ENCODE measurements at regions of chr12 and their contacts with region 1.

Region 1: DNA sequence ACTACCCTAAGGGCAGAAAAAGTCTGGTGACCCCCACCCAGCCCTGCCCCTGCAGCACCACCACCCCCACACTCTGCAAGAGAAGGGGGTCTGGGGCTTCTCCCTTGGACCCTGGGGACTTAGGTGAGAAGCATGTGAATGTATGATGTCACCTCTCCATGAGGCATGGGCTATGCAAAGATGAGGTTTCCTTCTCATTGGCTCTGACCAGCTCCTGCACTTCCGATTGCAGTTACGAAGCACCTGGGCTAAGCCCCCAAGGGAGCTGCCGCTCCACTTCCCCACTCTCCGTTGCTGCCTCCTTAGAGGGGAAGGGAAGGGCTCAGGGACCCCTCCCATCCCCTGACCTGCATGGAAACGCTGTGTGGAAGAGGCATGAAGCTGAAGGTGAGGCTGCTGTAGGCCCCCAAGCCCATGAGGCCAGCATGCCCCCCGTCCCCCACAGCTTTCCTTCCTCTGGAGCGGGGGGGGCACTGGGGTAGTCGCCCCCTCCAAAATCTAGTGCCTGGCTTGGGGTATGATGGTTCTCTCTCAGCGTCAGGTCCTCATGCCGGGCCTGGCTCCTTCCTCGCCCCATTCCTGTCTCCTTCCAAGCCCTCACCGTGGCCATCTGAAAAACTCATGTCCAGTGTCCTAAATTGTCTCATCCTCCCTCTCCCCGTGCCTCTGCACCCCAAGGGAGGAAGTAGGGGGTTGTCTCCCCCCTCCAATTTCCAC is 5.5 kb upstream of the DDX23 start:
- DNase-seq: no peak
- ATAC-seq: peak in 1 of 4 donors; percentile 4
- H3K4me3 ChIP-seq: no peak overlapping the region
- H3K27ac ChIP-seq: no peak overlapping the region
- H3K4me1 ChIP-seq: peaks cover 0 to 3% (median 0%) of the 10 kb centered on the region in 4 donors
- H3K27me3 ChIP-seq: no peaks in the 10 kb centered on the region
- CTCF ChIP-seq: no peak
- POLR2A ChIP-seq: no peak

Region 2: DNA sequence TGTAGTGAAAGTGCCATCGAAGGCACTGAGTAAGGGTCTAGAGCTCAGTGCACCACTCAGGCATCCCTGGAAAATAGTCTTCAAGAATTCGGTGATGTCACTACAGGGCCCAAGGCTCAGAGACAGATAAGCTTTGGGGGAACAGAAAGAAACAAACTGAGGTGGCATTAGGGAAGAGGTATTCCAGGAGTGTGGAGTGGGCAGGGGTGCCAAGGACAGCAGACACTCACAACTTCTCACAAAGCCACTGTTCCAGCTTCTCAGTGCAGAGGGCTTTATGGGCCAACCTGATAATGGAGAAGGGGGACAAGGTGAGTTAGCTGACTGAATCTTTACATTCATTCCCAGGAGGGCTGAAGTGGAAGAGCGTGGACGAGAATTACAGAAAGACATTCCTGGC is 289.7 kb before region 1 on chr12:
- intact Hi-C with region 1: no loop called
- DNase-seq: no peak
- ATAC-seq: no peak
- H3K4me3 ChIP-seq: no peak overlapping the region
- H3K27ac ChIP-seq: no peak overlapping the region
- H3K4me1 ChIP-seq: no peaks in the 10 kb centered on the region
- H3K27me3 ChIP-seq: no peaks in the 10 kb centered on the region
- CTCF ChIP-seq: no peak
- POLR2A ChIP-seq: no peak

Region 3: DNA sequence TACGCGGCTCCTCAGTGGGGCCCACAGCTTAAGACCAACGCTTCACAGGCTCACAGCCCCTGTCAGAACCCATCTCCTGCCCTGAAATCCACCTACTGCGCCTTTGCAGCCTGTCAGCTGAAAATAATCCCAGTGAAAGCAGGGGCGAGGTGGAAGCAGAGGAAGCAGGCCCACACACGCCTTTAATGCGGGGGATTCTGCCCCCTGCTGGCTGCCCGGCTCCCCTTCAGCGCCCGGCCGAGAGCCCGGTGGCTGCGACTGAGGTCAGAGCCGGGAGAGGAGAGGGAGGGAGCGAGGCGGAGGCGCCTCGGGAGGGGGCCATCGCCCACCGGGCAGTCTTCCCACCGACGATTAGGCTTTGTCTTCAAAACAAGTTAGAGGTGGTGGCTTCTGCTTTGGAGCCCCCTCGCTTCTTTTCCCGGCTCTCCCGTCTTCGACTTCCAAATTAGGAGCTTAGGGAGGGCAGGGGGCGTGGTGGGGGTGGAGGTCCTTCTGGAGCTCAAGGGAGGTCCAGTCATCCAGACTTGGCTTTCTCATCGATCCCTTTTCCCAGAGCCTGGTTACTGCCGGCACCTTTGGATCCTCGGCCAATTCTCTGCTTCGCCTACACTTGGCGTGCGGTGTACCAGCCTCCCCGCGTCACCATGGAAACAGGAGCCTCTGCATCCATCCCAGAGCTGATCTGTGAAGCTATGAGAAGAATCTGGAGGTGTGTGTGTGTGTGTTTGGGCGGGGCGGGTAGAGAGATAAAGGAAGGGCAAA is 33.4 kb after region 1 on chr12:
- intact Hi-C with region 1: loop called in 1 of 2 experiments (anchors 5 kb)
- DNase-seq: peak; percentile 82 to 85 (median 83)
- ATAC-seq: peak; percentile 98 to 99 (median 99)
- H3K4me3 ChIP-seq: peak overlapping the region in 1 of 3 donors; percentile 24
- H3K27ac ChIP-seq: no peak overlapping the region
- H3K4me1 ChIP-seq: peaks cover 0 to 11% (median 2%) of the 10 kb centered on the region in 4 donors
- H3K27me3 ChIP-seq: no peaks in the 10 kb centered on the region
- CTCF ChIP-seq: peak; percentile 96 to 99 (median 96)
- POLR2A ChIP-seq: no peak

Region 4: GRCh38 chr12:48924617-48925303 is 67.3 kb after region 1 on chr12:
- intact Hi-C with region 1: no loop called
- DNase-seq: peak; percentile 50 to 60 (median 52)
- ATAC-seq: peak; percentile 68 to 75 (median 70)
- H3K4me3 ChIP-seq: peak overlapping the region; percentile 87 to 97 (median 96)
- H3K27ac ChIP-seq: peak overlapping the region; percentile 48 to 52 (median 51)
- H3K4me1 ChIP-seq: peaks cover 0 to 12% (median 0%) of the 10 kb centered on the region in 4 donors
- H3K27me3 ChIP-seq: no peaks in the 10 kb centered on the region
- CTCF ChIP-seq: peak; percentile 29 to 36 (median 32)
- POLR2A ChIP-seq: no peak

Measured in right lobe of liver (tissue), 6 donors.